Naive thymus-derived CD4-positive, alpha-beta T cell (primary cell): ENCODE measurements at regions of chr4 and their contacts with region 1.

Region 1: DNA sequence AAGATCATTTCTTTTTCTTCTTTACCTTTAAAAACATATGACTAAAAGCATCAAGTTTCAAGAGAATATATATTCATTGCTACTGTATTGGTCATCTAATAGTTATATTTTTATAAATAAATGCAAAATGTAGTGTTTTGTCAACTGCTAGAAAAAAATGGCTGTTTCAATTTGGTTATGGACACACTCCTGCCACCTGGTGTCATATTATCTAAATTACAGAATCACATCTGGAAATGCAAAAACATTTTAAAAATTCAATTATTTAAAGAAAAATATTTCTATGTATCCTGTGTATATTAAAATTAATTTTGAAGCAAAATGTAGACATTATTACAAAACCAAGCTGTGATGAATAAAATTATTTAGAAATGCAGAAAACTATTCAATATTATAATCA is 329.4 kb upstream of the PCDH18 start:
- DNase-seq: no peak
- ATAC-seq: no peak
- H3K4me3 ChIP-seq: no peak overlapping the region
- H3K4me3 Mint-ChIP-seq: no peak overlapping the region
- H3K27ac ChIP-seq: no peak overlapping the region
- H3K27ac Mint-ChIP-seq: no peak overlapping the region
- H3K4me1 ChIP-seq: no peaks in the 10 kb centered on the region
- H3K4me1 Mint-ChIP-seq: no peaks in the 10 kb centered on the region
- H3K27me3 ChIP-seq: no peaks in the 10 kb centered on the region
- H3K27me3 Mint-ChIP-seq: no peaks in the 10 kb centered on the region

Region 2: DNA sequence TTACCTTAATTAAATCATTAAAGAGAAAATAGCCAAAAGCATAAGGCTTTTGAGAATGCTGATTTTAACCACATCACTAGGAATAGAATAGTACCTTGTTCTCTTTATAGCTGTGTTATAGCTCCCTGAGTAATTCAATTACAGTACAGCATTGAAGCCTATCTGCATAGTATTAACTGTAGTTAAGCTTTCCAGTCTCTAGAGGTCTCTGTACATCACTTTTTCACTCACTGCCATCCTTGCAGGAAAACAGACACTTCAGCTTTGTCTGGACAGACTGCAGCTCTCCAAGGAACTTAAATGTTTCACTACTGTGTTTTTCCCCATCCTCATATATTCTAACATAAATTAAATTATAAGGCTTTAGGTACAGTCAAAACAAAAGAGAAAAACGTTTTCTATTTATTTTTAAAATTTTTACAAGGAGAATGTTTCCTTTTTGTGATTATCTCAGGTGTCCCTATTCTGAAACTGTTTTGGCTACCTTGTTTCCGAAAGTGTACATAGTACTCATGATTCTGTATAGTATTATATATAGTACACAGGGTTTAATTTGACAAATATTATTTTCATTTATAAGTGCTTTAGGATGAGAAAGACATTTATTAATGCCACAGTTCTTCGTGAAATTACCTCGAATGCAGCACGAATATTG is 737.3 kb before region 1 on chr4:
- CTCF ChIA-PET with region 1: no interaction called
- POLR2A ChIA-PET with region 1: no interaction called
- intact Hi-C with region 1: loop called in 1 of 2 experiments (anchors 5 kb)
- DNase-seq: no peak
- ATAC-seq: no peak
- H3K4me3 ChIP-seq: no peak overlapping the region
- H3K4me3 Mint-ChIP-seq: no peak overlapping the region
- H3K27ac ChIP-seq: no peak overlapping the region
- H3K27ac Mint-ChIP-seq: no peak overlapping the region
- H3K4me1 ChIP-seq: no peaks in the 10 kb centered on the region
- H3K4me1 Mint-ChIP-seq: no peaks in the 10 kb centered on the region
- H3K27me3 ChIP-seq: no peaks in the 10 kb centered on the region
- H3K27me3 Mint-ChIP-seq: no peaks in the 10 kb centered on the region

Region 3: DNA sequence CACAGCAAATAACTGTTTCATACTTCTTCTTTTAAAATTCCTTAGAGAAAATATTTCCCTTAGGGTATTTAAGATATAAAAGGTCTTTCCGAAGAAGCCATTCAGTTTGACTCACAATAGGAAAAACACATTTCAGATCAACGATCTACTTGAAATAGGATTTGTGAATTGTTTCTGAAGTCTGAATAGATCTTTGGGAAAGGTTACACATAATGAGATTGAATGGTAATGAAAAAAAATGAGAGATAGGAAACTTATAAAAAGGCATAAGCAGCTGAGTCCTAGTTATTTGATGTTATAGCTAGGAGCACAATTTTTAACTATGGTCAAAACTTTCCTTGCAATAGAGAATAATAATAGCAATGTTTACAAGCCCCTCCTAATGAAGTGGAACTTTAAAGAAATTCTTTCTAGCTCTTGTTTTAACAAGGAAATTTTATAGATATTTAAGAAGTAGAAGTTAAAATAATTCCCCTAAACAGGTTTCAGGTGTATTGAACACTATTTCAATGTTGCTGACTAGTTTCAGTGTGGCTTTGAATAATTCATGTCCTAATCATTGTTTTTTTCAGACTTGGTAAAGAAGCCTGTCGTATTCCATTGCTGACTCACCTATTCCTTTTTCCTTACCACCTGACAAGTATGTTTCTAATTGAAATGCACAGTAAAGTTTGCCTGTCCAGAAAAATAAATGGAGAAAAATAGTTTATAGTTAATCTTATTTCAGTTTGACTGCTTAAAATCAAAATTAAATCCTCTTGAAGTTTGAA is 418.5 kb before region 1 on chr4:
- CTCF ChIA-PET with region 1: no interaction called
- POLR2A ChIA-PET with region 1: no interaction called
- intact Hi-C with region 1: no loop called
- DNase-seq: no peak
- ATAC-seq: no peak
- H3K4me3 ChIP-seq: no peak overlapping the region
- H3K4me3 Mint-ChIP-seq: no peak overlapping the region
- H3K27ac ChIP-seq: no peak overlapping the region
- H3K27ac Mint-ChIP-seq: no peak overlapping the region
- H3K4me1 ChIP-seq: no peaks in the 10 kb centered on the region
- H3K4me1 Mint-ChIP-seq: no peaks in the 10 kb centered on the region
- H3K27me3 ChIP-seq: no peaks in the 10 kb centered on the region
- H3K27me3 Mint-ChIP-seq: no peaks in the 10 kb centered on the region